Activated B cell treated with CpG ODN at 0.5 μM for 24 hours (primary cell): ENCODE measurements at regions of chr17 and their contacts with region 1.

Region 1: GRCh38 chr17:48047741-48048383 is at the start of gene NFE2L1:
- DNase-seq: peak; percentile 89
- ATAC-seq: peak; percentile 94
- H3K4me3 Mint-ChIP-seq: peak within 1 kb of the TSS; percentile 97
- H3K27ac Mint-ChIP-seq: peak within 1 kb of the TSS; percentile 100
- H3K4me1 Mint-ChIP-seq: peaks cover 62% of the 10 kb centered on the region
- H3K27me3 Mint-ChIP-seq: no peaks in the 10 kb centered on the region
- CTCF ChIP-seq: no peak
- total RNA-seq, gene NFE2L1: 127 and 141 TPM in 2 replicates

Region 2: DNA sequence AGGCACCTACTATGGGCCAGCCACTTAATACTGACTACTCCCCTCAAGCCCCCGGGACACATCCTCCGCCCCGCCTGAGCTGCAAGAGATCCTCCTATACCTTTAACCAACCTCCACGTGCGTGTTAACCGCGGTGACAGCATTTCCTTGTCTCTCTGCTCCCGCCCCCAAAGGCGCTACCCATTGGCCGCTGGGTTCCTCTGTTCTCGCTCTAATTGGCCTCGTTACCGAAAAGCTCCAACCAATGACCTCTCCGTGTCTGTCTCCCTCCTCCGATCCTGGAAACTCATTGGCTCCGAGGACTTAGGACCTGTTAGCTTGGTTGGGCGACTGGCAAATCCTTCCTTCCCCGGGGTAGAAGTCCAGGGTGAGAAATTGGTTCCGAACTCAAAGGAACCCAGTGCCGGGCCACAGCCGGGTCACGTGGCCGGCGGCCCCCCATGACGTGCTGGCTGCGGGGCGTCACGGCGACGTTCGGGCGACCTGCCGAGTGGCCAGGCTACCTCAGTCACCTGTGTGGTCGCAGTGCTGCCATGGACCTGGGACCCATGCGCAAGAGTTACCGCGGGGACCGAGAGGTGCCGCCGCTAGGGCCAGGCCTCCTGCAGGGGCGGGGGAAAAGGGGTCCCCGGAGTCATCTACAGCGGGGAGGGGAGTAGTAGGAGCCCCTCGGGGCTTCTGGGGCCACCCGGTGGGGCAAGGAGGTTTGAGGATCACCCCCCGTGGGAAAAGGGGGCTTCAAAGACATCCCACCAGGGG is 106.4 kb before region 1 on chr17 and contains the start of gene PNPO:
- CTCF ChIA-PET with region 1: no interaction called
- POLR2A ChIA-PET with region 1: interaction called, 3 read pairs
- intact Hi-C with region 1: loop called (anchors 1 kb)
- DNase-seq: peak; percentile 74
- ATAC-seq: peak; percentile 99
- H3K4me3 Mint-ChIP-seq: peak within 1 kb of the TSS; percentile 91
- H3K27ac Mint-ChIP-seq: peak within 1 kb of the TSS; percentile 91
- H3K4me1 Mint-ChIP-seq: peaks cover 41% of the 10 kb centered on the region
- H3K27me3 Mint-ChIP-seq: no peaks in the 10 kb centered on the region
- CTCF ChIP-seq: no peak
- total RNA-seq, gene PNPO: 25.1 and 26.5 TPM in 2 replicates

Region 3: GRCh38 chr17:48037036-48037837 is 10.6 kb before region 1 on chr17 and contains the start of gene COPZ2:
- CTCF ChIA-PET with region 1: interaction called, 8 read pairs
- POLR2A ChIA-PET with region 1: interaction called, 27 read pairs
- intact Hi-C with region 1: loop called (anchors 1 kb)
- DNase-seq: peak; percentile 53
- ATAC-seq: peak; percentile 93
- H3K4me3 Mint-ChIP-seq: peak within 1 kb of the TSS; percentile 86
- H3K27ac Mint-ChIP-seq: no peak within 1 kb of the TSS
- H3K4me1 Mint-ChIP-seq: peaks cover 14% of the 10 kb centered on the region
- H3K27me3 Mint-ChIP-seq: peaks cover 17% of the 10 kb centered on the region
- CTCF ChIP-seq: no peak
- total RNA-seq, gene COPZ2: 3.3 and 4.1 TPM in 2 replicates

Region 4: GRCh38 chr17:48101012-48101720 is 53.3 kb after region 1 on chr17 and contains the start of gene CBX1:
- CTCF ChIA-PET with region 1: no interaction called
- POLR2A ChIA-PET with region 1: interaction called, 36 read pairs
- intact Hi-C with region 1: loop called (anchors 1 kb)
- DNase-seq: peak; percentile 92
- ATAC-seq: peak; percentile 92
- H3K4me3 Mint-ChIP-seq: peak within 1 kb of the TSS; percentile 94
- H3K27ac Mint-ChIP-seq: peak within 1 kb of the TSS; percentile 92
- H3K4me1 Mint-ChIP-seq: peaks cover 50% of the 10 kb centered on the region
- H3K27me3 Mint-ChIP-seq: no peaks in the 10 kb centered on the region
- CTCF ChIP-seq: no peak
- total RNA-seq, gene CBX1: 46.0 and 49.5 TPM in 2 replicates

Region 5: DNA sequence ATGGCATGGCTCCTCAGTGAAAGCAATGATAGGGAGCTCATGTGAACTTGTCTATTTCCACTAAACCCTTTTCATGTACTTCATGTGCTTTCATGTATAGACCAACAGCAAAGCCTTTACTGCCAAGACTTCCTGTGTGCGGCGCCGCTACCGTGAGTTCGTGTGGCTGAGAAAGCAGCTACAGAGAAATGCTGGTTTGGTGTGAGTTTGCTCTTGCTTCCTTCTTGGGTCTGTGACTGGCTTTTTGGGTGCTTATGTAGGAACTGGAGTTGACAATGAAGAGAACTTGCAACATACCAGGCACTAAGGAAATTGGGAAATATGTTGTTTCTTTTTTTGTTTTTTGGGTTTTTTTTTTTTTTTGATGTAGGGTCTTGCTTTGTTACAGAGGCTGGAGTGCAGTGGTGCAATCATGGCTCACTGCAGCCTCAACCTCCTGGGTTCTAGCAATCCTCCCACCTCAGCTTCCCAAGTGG is 65.4 kb after region 1 on chr17:
- CTCF ChIA-PET with region 1: interaction called, 3 read pairs
- POLR2A ChIA-PET with region 1: interaction called, 63 read pairs
- intact Hi-C with region 1: loop called (anchors 1 kb)
- DNase-seq: peak; percentile 30
- ATAC-seq: no peak
- H3K4me3 Mint-ChIP-seq: peak overlapping the region; percentile 99
- H3K27ac Mint-ChIP-seq: peak overlapping the region; percentile 99
- H3K4me1 Mint-ChIP-seq: peaks cover 58% of the 10 kb centered on the region
- H3K27me3 Mint-ChIP-seq: no peaks in the 10 kb centered on the region
- CTCF ChIP-seq: no peak